Naive thymus-derived CD4-positive, alpha-beta T cell (primary cell): ENCODE measurements at regions of chr7 and their contacts with region 1.

Region 1: DNA sequence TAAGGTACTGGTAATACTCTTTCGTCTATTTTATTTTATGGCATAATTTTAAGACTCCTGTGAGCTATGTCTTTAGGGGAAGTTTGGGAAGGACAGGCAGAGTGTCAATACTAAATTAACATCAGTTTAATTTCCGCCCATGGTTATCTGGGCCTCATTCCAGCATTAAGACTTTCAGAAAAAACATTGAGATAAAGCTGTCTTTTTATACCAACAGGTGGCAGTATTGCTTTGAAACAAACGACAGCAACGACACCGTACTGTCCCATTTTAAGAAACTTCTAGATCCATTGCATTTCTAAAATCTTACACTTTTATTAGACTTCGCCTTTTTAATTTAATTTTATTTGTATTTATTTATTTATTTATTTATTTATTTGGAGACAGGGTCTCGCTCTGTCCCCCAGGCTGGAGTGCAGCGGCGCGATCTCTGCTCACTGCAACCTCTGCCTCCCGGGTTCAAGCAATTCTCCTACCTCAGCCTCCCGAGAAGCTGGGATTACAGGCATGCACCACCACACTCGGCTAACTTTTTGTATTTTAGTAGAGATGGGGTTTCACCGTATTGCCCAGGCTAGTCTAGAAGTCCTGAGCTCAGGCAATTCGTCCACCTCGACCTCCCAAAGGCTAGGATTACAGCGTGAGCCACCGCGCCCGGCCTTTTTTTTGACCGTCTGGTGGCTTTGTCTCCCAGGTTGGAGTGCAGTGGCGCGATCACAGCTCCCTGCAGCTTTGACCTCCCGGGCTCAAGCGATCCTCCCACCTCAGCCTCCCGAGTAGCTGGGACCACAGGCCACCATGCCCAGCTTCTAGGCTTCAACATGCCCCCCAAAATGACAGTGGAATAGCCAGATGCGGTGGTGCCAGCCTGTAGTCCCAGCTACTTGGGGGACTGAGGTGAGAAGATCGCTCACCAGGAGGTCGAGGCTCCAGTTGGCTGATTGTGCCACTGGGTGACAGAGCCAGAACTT is 78.7 kb upstream of the C1GALT1 start:
- DNase-seq: peak in 7 of 9 donors; percentile 41 to 71 (median 61)
- ATAC-seq: peak; percentile 85
- H3K4me3 ChIP-seq: no peak overlapping the region
- H3K4me3 Mint-ChIP-seq: peak overlapping the region in 1 of 10 donors; percentile 42
- H3K27ac ChIP-seq: no peak overlapping the region
- H3K27ac Mint-ChIP-seq: peak overlapping the region in 3 of 9 donors; percentile 5 to 72 (median 43)
- H3K4me1 ChIP-seq: peaks cover 0 to 17% of the 10 kb centered on the region in 2 donors
- H3K4me1 Mint-ChIP-seq: peaks cover 6 to 31% (median 29%) of the 10 kb centered on the region in 7 donors
- H3K27me3 ChIP-seq: no peaks in the 10 kb centered on the region
- H3K27me3 Mint-ChIP-seq: peaks cover 0 to 9% (median 0%) of the 10 kb centered on the region in 5 donors

Region 2: DNA sequence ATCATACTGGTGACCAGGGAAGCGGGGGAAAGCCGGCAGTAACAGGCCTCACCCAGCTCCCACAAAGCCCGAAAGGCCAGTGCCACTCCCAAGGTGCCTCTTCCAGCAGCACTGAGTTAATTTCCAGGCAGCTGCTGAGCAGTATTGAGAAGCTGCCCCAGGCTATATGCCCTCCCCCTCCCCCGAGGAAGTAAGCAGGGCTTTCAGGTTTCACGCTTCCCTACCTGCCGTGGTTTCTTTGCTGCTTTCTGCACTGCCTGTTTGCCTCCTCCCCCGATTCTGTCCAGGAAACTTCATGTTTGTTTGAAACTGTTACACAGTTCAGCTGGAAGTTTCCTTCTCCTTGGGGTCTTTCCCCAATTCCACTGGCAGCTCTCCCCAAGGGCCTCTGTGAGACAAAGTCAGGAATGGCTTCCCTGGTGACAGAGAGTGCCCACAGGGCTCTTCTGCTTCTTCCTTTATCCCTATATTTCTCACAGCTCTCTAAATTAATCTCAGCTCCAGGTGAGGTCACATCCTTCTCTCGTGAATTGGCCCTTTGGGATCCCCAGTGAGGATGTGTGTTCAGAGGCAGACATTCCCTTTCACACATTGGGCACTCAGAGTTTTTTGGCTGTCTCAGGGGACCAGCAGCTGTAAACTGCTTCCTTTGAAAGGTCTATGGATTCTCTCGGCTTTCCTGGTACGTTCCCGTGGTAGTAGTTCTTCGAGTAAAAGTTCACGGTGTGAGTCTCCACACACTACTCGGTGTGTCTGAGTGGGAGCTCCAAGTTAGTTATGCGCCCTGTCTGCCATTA is 98.1 kb after region 1 on chr7:
- CTCF ChIA-PET with region 1: no interaction called
- POLR2A ChIA-PET with region 1: no interaction called
- intact Hi-C with region 1: loop called in 1 of 2 experiments (anchors 1 kb)
- DNase-seq: peak; percentile 16 to 63 (median 54)
- ATAC-seq: peak; percentile 91
- H3K4me3 ChIP-seq: peak overlapping the region; percentile 21
- H3K4me3 Mint-ChIP-seq: peak overlapping the region; percentile 56 to 85 (median 78)
- H3K27ac ChIP-seq: peak overlapping the region; percentile 38
- H3K27ac Mint-ChIP-seq: peak overlapping the region; percentile 5 to 90 (median 86)
- H3K4me1 ChIP-seq: peaks cover 30 to 31% of the 10 kb centered on the region in 2 donors
- H3K4me1 Mint-ChIP-seq: peaks cover 60 to 94% (median 84%) of the 10 kb centered on the region in 7 donors
- H3K27me3 ChIP-seq: no peaks in the 10 kb centered on the region
- H3K27me3 Mint-ChIP-seq: no peaks in the 10 kb centered on the region

Region 3: DNA sequence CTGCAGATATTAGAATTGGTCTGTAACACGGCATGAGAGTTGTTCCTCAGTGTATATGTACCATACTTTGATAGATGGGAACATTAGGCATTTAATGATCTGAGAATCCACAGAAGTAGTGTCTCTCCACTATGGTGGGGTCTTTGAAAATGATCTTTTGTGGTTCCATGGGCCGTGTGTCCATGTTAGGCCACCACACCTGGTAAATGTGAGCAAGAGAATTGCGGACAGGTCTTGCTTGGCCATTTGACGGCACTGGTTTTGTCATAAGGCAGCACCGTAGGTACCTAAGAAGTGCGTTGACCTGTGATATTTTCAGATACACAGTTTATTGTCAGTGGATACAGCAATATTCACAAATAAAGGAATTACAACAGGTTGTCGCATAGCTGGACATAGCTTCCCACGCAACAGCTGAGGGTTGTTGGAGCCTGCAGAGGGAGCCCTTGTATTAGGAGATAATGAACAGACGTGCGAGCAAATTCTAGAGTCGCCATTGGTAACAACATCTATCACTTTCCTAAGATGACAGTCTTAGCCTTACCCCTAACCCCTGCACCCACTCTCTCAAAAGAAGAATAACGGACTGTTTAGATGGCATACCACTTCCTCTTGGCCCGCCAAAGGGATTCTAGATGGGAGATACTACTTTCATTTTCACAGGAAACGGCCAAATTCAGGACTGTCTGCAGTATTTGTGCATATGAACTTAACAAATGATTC is 320.7 kb after region 1 on chr7:
- CTCF ChIA-PET with region 1: interaction called, 3 read pairs
- POLR2A ChIA-PET with region 1: no interaction called
- intact Hi-C with region 1: loop called (anchors 1 to 10 kb)
- DNase-seq: peak in 6 of 9 donors; percentile 8 to 44 (median 25)
- ATAC-seq: peak; percentile 73
- H3K4me3 ChIP-seq: peak overlapping the region; percentile 59
- H3K4me3 Mint-ChIP-seq: peak overlapping the region in 8 of 10 donors; percentile 74 to 89 (median 82)
- H3K27ac ChIP-seq: no peak overlapping the region
- H3K27ac Mint-ChIP-seq: peak overlapping the region in 7 of 9 donors; percentile 9 to 80 (median 48)
- H3K4me1 ChIP-seq: no peaks in the 10 kb centered on the region
- H3K4me1 Mint-ChIP-seq: peaks cover 0 to 12% (median 5%) of the 10 kb centered on the region in 7 donors
- H3K27me3 ChIP-seq: no peaks in the 10 kb centered on the region
- H3K27me3 Mint-ChIP-seq: no peaks in the 10 kb centered on the region

Region 4: DNA sequence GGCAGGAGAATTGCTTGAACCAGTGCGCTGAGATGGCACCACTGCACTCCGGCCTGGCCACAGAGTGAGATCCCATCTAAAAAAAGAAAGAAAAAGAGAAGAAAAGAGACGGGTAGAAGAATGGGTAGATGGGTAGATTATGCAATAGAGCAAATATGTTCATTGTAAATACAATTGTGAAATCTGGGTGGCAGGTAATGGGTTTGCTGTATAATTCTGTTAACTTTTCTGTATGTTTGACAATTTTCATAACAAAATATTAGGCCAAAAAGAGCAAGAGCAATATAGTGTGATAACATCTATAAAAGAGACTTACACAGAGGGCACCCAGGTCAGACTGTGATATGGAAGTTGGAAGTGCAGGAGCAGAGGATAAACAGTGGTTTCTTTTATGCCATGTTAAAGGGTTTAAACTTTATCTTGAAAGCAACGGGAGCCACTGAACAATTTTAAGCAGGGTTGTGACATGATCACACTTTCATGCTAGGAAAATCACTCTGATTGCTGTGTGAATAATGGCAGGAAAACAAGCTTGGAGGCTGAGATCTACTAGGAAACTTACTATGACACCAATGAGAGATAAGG is 438.7 kb after region 1 on chr7:
- CTCF ChIA-PET with region 1: interaction called, 44 read pairs
- POLR2A ChIA-PET with region 1: no interaction called
- intact Hi-C with region 1: loop called (anchors 1 kb)
- DNase-seq: no peak
- ATAC-seq: no peak
- H3K4me3 ChIP-seq: no peak overlapping the region
- H3K4me3 Mint-ChIP-seq: no peak overlapping the region
- H3K27ac ChIP-seq: no peak overlapping the region
- H3K27ac Mint-ChIP-seq: no peak overlapping the region
- H3K4me1 ChIP-seq: no peaks in the 10 kb centered on the region
- H3K4me1 Mint-ChIP-seq: peaks cover 0 to 5% (median 0%) of the 10 kb centered on the region in 7 donors
- H3K27me3 ChIP-seq: no peaks in the 10 kb centered on the region
- H3K27me3 Mint-ChIP-seq: peaks cover 0 to 11% (median 5%) of the 10 kb centered on the region in 5 donors

Region 5: DNA sequence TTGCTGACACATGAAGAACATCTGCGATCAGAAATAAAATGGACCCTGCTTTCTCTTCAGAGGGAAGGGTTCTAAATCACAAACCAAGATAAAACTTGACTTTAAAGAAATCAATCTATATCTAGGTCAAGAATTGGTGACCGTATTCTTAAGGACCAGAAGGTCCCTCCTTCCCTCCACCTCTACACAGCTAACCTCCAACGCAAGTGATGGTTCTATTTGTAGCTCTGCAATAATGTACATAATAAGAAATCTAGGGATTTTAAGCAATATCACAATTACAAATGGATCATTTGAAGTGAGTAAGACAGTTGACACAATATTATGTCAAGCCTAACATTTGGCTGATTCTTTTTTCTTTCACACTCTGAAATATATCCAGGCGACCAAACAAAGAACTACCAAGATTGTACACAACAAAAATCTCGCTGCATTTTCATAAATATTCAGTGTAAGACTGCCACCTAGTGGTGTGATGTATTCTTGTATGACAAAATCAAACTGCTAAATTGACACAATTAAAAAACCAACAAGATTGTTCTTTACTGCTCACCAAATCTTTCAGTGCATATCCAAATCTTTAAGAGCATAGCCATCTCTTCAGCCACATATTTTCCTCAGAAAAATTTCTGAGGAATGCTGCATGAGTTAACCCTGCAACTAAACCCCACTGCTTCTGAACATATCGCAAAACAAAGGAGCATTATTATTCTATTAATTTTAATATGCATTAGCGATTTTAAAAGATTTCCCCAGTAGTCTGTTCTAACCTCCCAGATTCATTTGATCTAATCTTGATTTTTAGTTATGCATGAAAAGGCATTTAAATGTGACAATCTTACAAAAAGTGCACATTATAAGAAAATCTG is 1113.8 kb after region 1 on chr7:
- CTCF ChIA-PET with region 1: interaction called, 3 read pairs
- POLR2A ChIA-PET with region 1: no interaction called
- intact Hi-C with region 1: loop called (anchors 1 to 2 kb)
- DNase-seq: peak in 7 of 9 donors; percentile 42 to 76 (median 68)
- ATAC-seq: peak; percentile 84
- H3K4me3 ChIP-seq: no peak overlapping the region
- H3K4me3 Mint-ChIP-seq: no peak overlapping the region
- H3K27ac ChIP-seq: no peak overlapping the region
- H3K27ac Mint-ChIP-seq: peak overlapping the region in 1 of 9 donors; percentile 22
- H3K4me1 ChIP-seq: no peaks in the 10 kb centered on the region
- H3K4me1 Mint-ChIP-seq: peaks cover 0 to 16% (median 3%) of the 10 kb centered on the region in 7 donors
- H3K27me3 ChIP-seq: no peaks in the 10 kb centered on the region
- H3K27me3 Mint-ChIP-seq: no peaks in the 10 kb centered on the region